AG04449 (cell line): ENCODE measurements at regions of chr14 and their contacts with region 1.

Region 1: DNA sequence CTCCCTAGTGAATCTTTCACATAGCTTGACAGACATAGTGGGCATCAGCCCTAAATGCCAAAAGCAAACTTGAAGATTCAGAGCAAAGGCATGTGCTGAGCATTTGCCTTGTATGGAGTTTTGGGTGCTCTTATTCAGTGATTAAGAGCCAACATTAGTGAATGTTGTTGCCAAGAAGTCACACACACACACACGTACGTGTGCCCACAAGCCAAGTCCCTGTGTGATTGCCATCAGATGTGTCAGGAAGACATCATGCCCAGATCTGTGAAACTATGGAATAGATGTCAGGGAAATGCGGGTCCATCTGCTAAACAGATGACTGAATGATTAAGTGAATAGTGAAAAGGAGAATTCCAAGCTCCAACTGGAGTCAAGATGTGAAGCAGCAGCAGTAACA is 149.0 kb downstream of the AKAP6 start:
- DNase-seq: no peak
- H3K4me3 ChIP-seq: no peak overlapping the region
- CTCF ChIP-seq: no peak

Region 2: DNA sequence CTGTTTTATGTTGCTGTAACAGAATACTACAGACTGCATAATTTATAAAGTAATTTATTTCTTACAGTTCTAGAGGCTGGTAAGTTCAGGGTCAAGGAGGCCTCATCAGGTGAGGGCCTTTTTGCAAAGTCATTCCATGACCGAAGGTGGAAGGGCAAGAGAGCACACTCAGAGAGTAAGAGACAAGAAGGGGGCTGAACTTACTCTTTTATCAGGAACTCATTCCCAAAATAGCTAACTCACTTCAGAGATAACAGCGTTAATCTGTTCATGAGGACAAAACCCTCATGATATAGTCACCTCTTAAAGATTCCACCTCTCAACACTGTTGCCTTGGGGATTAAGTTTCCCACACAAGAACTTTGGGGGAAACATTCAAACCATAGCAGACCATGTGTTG is 327.7 kb before region 1 on chr14:
- CTCF ChIA-PET with region 1: no interaction called
- POLR2A ChIA-PET with region 1: no interaction called
- DNase-seq: no peak
- H3K4me3 ChIP-seq: no peak overlapping the region
- CTCF ChIP-seq: no peak

Region 3: DNA sequence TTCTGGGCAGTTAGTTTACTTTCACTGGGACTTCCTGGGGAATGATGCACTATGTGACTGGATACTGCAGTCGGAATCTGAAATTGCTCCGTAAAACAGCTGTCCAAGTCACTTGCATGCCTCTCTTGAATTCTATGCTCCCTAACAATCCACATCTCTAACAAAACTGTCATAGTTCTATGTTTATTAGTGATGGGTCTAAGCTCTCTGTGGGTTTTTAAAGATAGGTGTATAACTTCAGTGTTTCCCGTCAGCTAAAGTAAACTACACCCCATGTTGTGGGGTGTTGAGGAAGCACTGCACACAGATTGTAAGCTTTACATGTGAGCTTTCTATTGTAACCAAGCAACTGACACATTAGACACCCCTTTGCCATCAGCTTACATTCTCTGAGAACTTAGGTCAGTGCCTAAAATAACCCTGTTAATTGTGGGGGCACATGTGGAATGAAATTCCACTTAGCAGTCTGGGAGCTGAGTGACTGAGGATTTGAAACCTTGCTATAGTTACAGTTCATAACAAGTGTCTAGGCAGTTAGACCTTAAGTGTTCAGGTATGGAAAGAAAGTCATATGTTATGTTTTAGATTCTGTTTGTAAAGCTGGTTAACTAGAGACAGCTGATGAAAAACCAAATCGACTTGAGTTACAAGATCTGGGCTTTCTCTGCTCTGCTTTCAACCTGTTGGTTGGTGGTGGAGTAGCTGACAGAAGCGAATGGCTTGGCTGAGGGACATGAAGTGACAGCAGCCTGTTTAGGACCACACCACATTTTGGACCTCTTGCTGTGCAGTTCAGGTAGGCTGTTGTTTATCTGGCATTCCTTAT is 16.8 kb after region 1 on chr14:
- CTCF ChIA-PET with region 1: interaction called, 10 read pairs
- POLR2A ChIA-PET with region 1: no interaction called
- DNase-seq: no peak
- H3K4me3 ChIP-seq: peak overlapping the region; percentile 55
- CTCF ChIP-seq: no peak